Activated T-helper 2 cell treated with anti-CD3 and anti-CD28 coated beads, Interferon-gamma antibody, Interleukin-2, Interleukin-4, amounts not matched to agents 10 μg/mL and 5 μg/mL and 100 μg/mL, durations not matched to agents 14 hours and 24 hours and 36 hours (primary cell): ENCODE measurements at regions of chr17 and their contacts with region 1.

Region 1: DNA sequence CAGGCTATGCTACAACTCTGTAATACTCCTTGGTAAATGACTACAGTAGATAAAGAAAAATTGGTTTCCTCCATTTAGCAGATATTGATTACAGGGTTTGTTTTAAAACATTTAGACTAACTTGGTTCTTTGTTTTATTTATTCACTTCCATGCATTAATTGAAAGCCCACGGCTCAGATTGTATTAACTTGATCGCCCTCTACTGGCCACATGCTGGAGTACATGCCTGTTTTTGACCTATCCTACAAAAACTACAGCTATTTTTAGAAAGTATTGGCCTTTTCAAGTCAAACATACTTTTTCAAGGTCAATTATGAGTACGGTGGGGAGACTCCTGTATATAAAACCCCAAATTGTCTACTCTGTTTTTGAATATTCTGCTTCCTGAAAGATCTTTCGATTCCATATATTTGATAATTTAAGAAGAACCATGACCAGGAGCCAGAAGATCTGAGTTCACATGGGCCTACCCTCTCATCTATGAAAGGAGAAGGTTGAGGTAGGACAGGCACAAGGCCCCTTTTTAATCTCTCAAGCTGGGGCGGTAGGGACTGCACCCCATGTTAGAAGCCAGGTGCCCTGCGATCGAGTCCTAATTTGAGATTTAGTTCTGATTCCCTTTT is 51.8 kb downstream of the CA10 start:
- DNase-seq: no peak
- H3K4me3 Mint-ChIP-seq: no peak overlapping the region
- H3K27ac Mint-ChIP-seq: no peak overlapping the region
- H3K4me1 Mint-ChIP-seq: no peaks in the 10 kb centered on the region
- H3K27me3 Mint-ChIP-seq: no peaks in the 10 kb centered on the region

Region 2: GRCh38 chr17:51850201-51850600 is 256.5 kb before region 1 on chr17:
- intact Hi-C with region 1: loop called (anchors 10 kb)
- DNase-seq: no peak
- H3K4me3 Mint-ChIP-seq: no peak overlapping the region
- H3K27ac Mint-ChIP-seq: no peak overlapping the region
- H3K4me1 Mint-ChIP-seq: no peaks in the 10 kb centered on the region
- H3K27me3 Mint-ChIP-seq: peaks cover 4% of the 10 kb centered on the region

Region 3: GRCh38 chr17:52084176-52084575 is 22.6 kb before region 1 on chr17:
- intact Hi-C with region 1: no loop called
- DNase-seq: no peak
- H3K4me3 Mint-ChIP-seq: no peak overlapping the region
- H3K27ac Mint-ChIP-seq: no peak overlapping the region
- H3K4me1 Mint-ChIP-seq: no peaks in the 10 kb centered on the region
- H3K27me3 Mint-ChIP-seq: no peaks in the 10 kb centered on the region

Region 4: GRCh38 chr17:52120465-52120864 is 13.7 kb after region 1 on chr17:
- intact Hi-C with region 1: no loop called
- DNase-seq: no peak
- H3K4me3 Mint-ChIP-seq: no peak overlapping the region
- H3K27ac Mint-ChIP-seq: no peak overlapping the region
- H3K4me1 Mint-ChIP-seq: no peaks in the 10 kb centered on the region
- H3K27me3 Mint-ChIP-seq: no peaks in the 10 kb centered on the region

Region 5: DNA sequence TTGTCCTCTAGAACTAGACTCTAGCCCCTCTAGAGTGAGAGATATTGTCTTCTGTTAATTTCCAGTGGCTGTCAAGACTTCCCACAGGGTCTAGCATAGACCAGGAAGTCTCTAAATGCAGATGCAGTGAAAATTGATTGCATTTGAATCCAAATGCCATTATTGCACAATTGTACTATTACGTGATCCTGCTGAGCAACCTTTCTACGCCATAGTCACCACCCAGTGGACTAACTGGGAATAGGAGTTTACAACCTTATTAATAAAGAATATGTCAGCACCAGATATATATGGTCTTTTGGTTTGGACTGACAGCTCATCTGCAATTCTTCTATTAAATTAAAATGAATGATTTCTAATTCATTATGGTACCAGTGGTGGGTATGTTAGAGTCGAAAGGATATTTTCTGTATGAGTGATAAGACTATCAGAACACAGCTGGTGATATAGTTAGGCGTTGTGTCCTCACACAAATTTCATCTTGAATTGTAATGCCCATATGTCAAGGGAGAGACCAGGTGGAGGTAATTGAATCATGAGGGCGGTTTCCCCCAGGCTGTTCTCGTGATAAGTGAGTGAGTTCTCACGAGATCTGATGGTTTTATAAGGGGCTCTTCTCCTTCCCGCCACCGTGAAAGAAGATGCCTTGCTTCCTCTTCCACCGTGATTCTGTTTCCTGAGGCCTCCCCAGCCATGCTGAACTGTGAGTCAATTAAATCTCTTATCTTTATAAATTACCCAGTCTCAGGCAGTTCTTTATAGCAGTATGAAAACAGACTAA is 190.7 kb after region 1 on chr17:
- intact Hi-C with region 1: no loop called
- DNase-seq: no peak
- H3K4me3 Mint-ChIP-seq: no peak overlapping the region
- H3K27ac Mint-ChIP-seq: no peak overlapping the region
- H3K4me1 Mint-ChIP-seq: no peaks in the 10 kb centered on the region
- H3K27me3 Mint-ChIP-seq: no peaks in the 10 kb centered on the region